PC-9 (cell line): ENCODE measurements at regions of chr3 and their contacts with region 1.

Region 1: GRCh38 chr3:69739204-69740102 is at the start of gene MITF:
- DNase-seq: peak; percentile 75 to 88
- H3K4me3 ChIP-seq: peak within 1 kb of the TSS; percentile 83
- H3K27ac ChIP-seq: no peak within 1 kb of the TSS
- H3K4me1 ChIP-seq: peaks cover 18% of the 10 kb centered on the region; the same call in 1 of the 2 replicates
- H3K27me3 ChIP-seq: no peaks in the 10 kb centered on the region
- CTCF ChIP-seq: no peak
- total RNA-seq, gene MITF: 15.5 and 17.2 TPM in 2 replicates

Region 2: GRCh38 chr3:69761896-69762767 is 22.7 kb after region 1 on chr3:
- CTCF ChIA-PET with region 1: no interaction called
- POLR2A ChIA-PET with region 1: interaction called, 3 read pairs
- intact Hi-C with region 1: loop called (anchors 2 kb)
- DNase-seq: peak; percentile 15 to 85
- H3K4me3 ChIP-seq: peak overlapping the region; percentile 17; the same call in 1 of the 2 replicates
- H3K27ac ChIP-seq: peak overlapping the region; percentile 88
- H3K4me1 ChIP-seq: peaks cover 55% of the 10 kb centered on the region
- H3K27me3 ChIP-seq: no peaks in the 10 kb centered on the region
- CTCF ChIP-seq: no peak

Region 3: DNA sequence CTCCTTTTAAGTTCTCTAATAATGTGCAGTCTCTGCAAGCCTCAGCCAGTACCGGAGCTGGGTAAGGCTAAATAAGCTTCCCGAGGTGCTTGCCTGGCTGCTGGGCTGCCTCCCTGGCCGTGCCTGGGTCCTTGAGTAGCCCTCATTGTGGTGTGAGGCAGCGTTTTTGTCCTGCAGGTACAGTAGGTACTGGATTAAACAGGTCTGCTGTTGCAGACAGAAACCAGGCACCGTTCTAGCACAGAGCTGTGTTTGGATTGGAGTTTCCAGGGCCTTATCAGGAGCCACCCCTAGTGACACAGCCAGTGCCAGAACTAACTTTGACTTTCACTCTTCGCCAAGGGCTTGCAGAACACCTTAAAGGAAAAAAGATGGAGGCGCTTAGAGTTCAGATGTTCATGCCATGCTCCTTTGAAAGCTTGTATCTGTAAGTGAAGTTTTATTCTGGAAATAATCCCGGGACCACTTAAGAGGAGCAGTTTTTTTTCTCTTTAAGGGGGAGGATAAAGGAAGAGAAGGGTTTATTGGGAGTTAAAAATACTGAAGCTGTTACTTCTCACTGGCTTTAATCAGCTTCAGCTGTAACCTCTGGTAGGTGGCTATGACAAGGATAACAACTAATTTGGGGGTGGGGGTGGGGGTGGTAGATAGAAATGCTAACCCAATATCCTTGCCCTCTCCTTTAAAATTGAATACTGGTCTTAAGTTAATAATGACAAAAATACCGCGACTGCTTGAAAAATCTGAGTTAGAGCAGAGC is 126.6 kb after region 1 on chr3:
- CTCF ChIA-PET with region 1: no interaction called
- POLR2A ChIA-PET with region 1: interaction called, 4 read pairs
- intact Hi-C with region 1: loop called (anchors 2 kb)
- DNase-seq: peak in 1 of 2 experiments; percentile 58
- H3K4me3 ChIP-seq: no peak overlapping the region
- H3K27ac ChIP-seq: peak overlapping the region; percentile 83
- H3K4me1 ChIP-seq: peaks cover 51% of the 10 kb centered on the region
- H3K27me3 ChIP-seq: no peaks in the 10 kb centered on the region
- CTCF ChIP-seq: no peak